Activated CD8-positive, alpha-beta T cell treated with anti-CD3 and anti-CD28 coated beads for 36 hours (primary cell): ENCODE measurements at regions of chr1 and their contacts with region 1.

Region 1: DNA sequence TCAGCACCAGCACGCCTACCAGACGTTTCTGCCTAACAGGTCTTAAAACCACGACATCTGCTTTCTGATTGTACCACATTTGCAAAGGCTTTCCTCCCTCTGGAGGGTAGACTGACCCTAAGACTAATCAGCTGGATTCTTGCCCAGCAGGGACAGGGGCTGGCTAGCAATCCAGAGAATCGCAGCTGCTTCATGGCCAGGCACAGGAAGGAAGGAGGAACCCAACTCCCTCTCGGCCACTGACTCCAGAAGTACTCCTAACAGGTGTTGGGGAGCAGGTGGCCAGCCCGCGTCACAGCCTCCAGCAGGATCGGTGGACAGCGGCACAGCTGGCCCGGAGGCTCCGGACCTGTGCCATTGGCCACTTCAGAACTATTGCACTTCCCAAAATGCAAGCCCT is 180.8 kb downstream of the NPHP4 start:
- DNase-seq: no peak
- ATAC-seq: no peak
- H3K4me3 Mint-ChIP-seq: no peak overlapping the region
- H3K27ac Mint-ChIP-seq: no peak overlapping the region
- H3K4me1 Mint-ChIP-seq: no peaks in the 10 kb centered on the region
- H3K27me3 Mint-ChIP-seq: peaks cover 5% of the 10 kb centered on the region
- CTCF ChIP-seq: no peak

Region 2: GRCh38 chr1:5764959-5765358 is 46.5 kb before region 1 on chr1:
- CTCF ChIA-PET with region 1: no interaction called
- POLR2A ChIA-PET with region 1: no interaction called
- intact Hi-C with region 1: loop called (anchors 5 kb)
- DNase-seq: no peak
- ATAC-seq: no peak
- H3K4me3 Mint-ChIP-seq: no peak overlapping the region
- H3K27ac Mint-ChIP-seq: no peak overlapping the region
- H3K4me1 Mint-ChIP-seq: no peaks in the 10 kb centered on the region
- H3K27me3 Mint-ChIP-seq: peaks cover 30% of the 10 kb centered on the region
- CTCF ChIP-seq: no peak

Region 3: GRCh38 chr1:5877761-5878530 is 66.5 kb after region 1 on chr1:
- CTCF ChIA-PET with region 1: no interaction called
- POLR2A ChIA-PET with region 1: no interaction called
- intact Hi-C with region 1: no loop called
- DNase-seq: no peak
- ATAC-seq: no peak
- H3K4me3 Mint-ChIP-seq: no peak overlapping the region
- H3K27ac Mint-ChIP-seq: no peak overlapping the region
- H3K4me1 Mint-ChIP-seq: no peaks in the 10 kb centered on the region
- H3K27me3 Mint-ChIP-seq: no peaks in the 10 kb centered on the region
- CTCF ChIP-seq: no peak

Region 4: DNA sequence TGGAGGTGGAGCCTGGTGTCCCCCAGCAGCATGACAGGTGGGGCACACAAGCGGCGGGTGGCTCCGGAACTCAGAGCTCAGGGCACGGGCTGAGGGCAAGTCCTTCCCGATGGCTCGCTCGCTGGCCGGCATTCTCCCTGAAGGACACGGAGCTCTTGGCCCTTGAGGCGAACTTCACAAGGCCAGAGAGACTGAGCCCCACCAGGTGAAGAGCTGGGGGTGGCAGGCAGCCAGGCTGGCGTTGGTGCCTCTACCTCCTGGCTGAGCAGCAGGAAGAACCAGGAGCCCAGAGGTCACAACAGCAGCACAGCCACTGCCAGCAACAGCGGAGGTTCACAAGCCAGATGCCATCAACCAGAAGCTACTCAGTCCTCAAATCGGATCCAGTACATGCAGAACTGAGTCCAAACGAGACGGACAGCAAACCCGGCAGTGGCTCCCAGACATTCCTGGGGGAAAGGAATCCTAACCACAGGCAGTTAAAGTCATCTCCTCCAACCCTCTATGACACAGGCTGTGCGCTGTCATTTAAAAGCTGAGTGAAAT is 126.8 kb after region 1 on chr1:
- CTCF ChIA-PET with region 1: no interaction called
- POLR2A ChIA-PET with region 1: no interaction called
- intact Hi-C with region 1: no loop called
- DNase-seq: no peak
- ATAC-seq: no peak
- H3K4me3 Mint-ChIP-seq: no peak overlapping the region
- H3K27ac Mint-ChIP-seq: no peak overlapping the region
- H3K4me1 Mint-ChIP-seq: no peaks in the 10 kb centered on the region
- H3K27me3 Mint-ChIP-seq: no peaks in the 10 kb centered on the region
- CTCF ChIP-seq: no peak